Right ventricle myocardium inferior (tissue), 1 donor: ENCODE measurements at regions of chr12 and their contacts with region 1.

Region 1: GRCh38 chr12:54993161-54993835 is 8.7 kb upstream of the TESPA1 start:
- DNase-seq: no peak
- ATAC-seq: peak; percentile 53

Region 2: DNA sequence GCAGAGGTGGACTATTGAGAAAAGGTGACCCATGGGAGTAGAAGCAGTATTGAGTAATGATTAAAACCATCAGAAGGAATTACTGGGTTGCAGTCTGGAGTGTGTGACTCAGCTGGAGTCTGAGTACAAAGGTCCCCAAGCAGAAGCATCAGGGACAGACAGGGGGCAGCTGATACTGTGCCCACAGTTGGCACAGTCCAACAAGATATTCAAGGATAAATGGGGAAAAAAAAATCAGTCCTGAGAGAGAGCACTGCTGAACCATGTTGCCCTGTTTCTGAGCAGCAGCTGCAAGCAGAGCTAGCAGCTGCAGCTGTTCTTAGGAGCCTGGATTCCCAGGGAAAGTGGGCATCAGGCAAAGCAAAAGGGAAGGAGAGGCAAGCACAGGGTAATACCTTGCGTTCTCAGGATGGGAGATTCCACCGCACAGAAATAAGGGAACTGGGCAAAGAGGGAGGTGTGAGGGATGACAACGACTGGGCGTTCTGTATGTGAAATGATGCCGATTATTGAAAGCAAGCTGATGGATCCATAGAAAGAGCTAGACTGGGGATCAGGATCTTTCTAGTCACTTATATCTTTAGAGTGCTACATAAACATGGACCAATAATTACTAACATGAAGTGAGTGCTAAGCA is 44.2 kb after region 1 on chr12:
- intact Hi-C with region 1: no loop called
- DNase-seq: no peak
- ATAC-seq: no peak

Region 3: DNA sequence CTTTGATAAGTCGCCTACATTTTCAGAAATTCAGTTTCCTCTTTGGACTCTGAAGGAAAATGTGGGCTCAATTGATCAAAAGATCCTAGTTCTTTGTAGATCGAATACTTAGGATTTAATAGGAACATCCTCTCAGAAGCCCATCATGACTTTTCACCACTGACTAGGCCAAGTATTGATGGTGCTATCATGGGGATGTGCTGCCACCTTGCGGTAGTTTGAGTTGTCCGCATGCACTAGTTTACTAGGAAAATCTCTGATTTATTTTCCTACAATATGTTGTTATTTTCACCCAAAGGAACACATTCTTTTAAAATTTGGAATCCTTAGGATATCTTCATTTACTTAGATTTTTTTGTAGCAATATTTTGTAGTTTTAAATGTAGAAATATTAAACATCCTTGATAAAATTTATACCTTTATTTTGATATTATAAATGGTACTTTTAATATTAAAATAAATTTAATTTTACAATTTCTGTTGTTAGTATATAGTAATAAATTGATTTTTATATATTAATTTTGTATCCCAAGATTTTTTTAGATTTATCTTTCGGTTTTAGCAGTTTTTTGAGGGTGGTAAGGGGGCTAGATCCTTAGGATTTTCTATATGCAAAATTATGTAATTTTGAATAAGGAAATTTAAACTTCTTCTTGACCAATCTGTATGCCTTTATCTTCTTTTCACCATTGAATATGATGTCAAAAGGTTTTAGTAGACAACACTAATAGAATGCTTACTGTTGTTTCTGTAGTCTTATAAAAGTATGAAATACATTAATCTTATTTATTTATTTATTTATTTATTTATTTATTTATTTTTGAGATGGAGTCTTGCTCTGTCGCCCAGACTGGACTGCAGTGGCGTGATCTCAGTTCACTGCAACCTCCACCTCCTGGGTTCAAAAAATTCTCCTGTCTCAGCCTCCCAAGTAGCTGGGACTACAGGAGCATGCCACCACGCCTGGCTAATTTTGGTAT is 80.0 kb after region 1 on chr12:
- intact Hi-C with region 1: loop called (anchors 2 kb)
- DNase-seq: peak; percentile 73
- ATAC-seq: peak; percentile 65

Region 4: DNA sequence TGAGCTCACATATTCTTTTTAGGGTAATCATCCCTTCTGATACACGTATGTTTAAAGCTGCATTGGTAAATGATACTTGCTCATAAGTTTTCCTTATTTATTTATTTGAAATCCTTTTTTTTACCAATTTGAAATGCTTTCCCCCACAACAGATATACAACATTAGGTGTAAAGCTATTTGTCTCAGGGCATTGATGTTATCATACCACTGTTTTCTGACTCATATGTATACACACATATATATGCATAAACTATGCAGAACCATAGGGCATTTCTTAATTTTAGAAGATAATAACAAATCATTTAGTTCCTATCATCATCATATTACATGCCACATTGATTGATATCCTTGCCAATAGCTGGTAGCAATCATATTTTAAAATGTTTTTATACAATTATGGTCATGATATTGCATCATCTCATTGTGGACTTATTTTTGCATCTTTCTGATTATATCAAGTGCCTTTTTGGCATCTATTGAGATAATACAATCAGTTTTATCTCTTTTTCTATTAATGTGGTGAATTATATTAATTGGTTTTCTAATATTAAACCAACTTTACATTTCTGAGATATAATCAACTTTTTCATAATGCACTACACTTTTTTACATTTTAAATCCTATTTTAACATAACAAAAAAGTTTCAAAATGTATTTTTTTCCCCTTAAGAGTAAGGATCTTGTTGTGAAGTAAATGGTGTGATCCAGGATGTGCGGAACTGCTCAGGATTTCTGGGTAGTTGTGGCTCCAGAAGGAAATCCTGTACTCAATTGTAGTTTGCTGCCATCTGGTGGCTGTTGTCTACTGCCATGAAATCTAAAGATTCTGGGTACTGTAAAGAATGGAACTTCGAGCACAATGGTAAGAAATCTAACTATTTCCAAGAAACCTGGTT is 149.6 kb after region 1 on chr12:
- intact Hi-C with region 1: loop called (anchors 2 kb)
- DNase-seq: no peak
- ATAC-seq: no peak

Region 5: DNA sequence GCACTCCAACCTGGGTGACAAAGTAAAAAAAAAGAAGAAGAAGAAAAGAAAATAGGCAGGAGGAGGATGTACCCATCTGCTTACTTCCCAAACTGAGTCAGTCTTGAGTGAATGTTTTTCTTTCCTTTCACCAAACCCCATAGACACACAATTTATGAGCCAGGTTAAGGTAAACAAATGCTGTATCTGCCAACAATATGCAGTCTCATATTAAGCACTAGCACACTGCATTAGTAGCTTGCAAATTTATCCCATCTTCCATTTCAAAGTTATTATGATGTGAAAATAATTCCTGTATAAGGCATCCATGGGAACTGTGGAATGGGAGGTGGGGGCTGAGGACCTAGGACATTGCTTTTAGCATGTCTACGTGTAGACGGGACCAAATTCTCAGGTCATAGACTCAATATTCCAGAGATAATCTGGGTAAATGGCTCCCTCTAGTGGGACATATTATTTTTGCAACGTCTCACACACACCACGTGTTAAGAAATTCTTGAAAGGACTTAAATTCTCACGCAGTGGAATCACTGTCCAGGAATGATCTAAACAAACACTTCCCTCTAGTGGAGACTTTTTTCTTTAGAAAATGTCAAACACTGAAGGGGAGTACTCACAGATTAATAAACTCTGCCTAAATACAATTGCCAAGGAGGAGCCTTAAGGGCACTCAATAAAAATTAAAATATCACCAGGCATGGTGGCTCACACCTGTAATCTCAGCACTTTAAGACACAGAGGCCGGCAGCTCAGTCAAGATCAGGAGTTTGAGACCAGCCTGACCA is 626.2 kb after region 1 on chr12:
- intact Hi-C with region 1: loop called (anchors 10 kb)
- DNase-seq: no peak
- ATAC-seq: peak; percentile 91